HAP-1 (cell line): ENCODE measurements at regions of chr5 and their contacts with region 1.

Region 1: DNA sequence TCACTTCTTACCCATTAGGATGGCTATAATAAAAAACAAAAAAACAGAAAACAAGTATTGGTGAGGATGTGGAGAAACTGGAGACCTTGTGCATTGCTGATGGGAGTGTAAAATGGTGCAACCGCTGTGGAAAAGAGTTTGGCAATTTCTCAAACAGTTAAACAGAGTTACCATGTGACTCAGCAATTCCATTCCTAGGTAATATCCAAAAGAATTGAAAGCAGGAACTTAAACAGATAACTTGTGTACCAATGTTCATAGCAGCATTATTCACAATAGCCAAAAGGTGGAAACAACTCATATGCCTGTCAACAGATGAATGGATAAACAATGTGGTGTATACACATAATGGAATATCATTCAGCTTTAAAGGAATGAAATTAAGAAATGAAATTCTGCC is 28.9 kb downstream of the DCP2 start:
- DNase-seq: no peak
- H3K4me3 ChIP-seq: no peak overlapping the region
- H3K4me1 ChIP-seq: no peaks in the 10 kb centered on the region
- H3K27me3 ChIP-seq: no peaks in the 10 kb centered on the region

Region 2: DNA sequence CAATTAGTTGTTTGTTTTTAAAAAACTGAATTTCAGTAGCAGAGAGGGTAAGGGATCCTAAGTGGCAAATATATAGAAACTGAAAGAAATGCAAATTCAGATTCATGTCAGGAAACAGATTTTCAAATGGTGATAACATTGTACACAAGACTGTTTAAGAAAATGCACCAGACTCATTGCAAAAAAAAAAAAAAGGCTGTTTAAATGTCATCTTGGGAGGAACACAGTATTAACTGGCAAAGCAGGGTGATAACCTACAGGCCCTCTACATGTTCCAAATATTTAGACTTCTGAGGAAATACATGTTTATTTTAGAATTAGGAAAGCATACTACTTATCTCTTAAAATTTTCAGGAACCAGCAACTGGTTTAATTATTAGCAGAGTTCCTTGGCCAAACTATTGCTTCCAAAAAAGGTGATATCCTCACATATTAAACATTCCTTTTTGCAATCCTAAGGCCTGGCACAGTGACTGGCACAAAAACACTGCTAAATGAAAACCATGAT is 314.9 kb after region 1 on chr5:
- in situ Hi-C with region 1: loop called (anchors 10 kb)
- DNase-seq: no peak
- H3K4me3 ChIP-seq: no peak overlapping the region
- H3K4me1 ChIP-seq: peaks cover 8% of the 10 kb centered on the region
- H3K27me3 ChIP-seq: no peaks in the 10 kb centered on the region

Region 3: GRCh38 chr5:113606298-113607134 is 601.1 kb after region 1 on chr5:
- in situ Hi-C with region 1: loop called (anchors 5 kb)
- DNase-seq: peak; percentile 64 to 74
- H3K4me3 ChIP-seq: no peak overlapping the region
- H3K4me1 ChIP-seq: no peaks in the 10 kb centered on the region
- H3K27me3 ChIP-seq: no peaks in the 10 kb centered on the region